IMR-90 (cell line): ENCODE measurements at regions of chr12 and their contacts with region 1.

Region 1: GRCh38 chr12:96578526-96579125 is 89.2 kb downstream of the CFAP54 start:
- DNase-seq: peak; percentile 64
- ATAC-seq: peak; percentile 88
- H3K4me3 ChIP-seq: no peak overlapping the region
- H3K27ac ChIP-seq: no peak overlapping the region
- H3K4me1 ChIP-seq: no peaks in the 10 kb centered on the region
- H3K27me3 ChIP-seq: no peaks in the 10 kb centered on the region
- CTCF ChIP-seq: peak; percentile 80
- POLR2A ChIP-seq: no peak
- RAD21 ChIP-seq: peak; percentile 85

Region 2: GRCh38 chr12:96617178-96617577 is 38.6 kb after region 1 on chr12:
- CTCF ChIA-PET with region 1: no interaction called
- POLR2A ChIA-PET with region 1: no interaction called
- dilution Hi-C with region 1: no loop called
- in situ Hi-C with region 1: no loop called
- intact Hi-C with region 1: no loop called
- DNase-seq: no peak
- ATAC-seq: no peak
- H3K4me3 ChIP-seq: no peak overlapping the region
- H3K27ac ChIP-seq: no peak overlapping the region
- H3K4me1 ChIP-seq: no peaks in the 10 kb centered on the region
- H3K27me3 ChIP-seq: no peaks in the 10 kb centered on the region
- CTCF ChIP-seq: no peak
- POLR2A ChIP-seq: no peak
- RAD21 ChIP-seq: no peak

Region 3: GRCh38 chr12:98373025-98373554 is 1794.5 kb after region 1 on chr12:
- CTCF ChIA-PET with region 1: no interaction called
- POLR2A ChIA-PET with region 1: no interaction called
- dilution Hi-C with region 1: no loop called
- in situ Hi-C with region 1: loop called (anchors 25 kb)
- intact Hi-C with region 1: loop called (anchors 2 kb)
- DNase-seq: peak; percentile 51
- ATAC-seq: peak; percentile 64; the same call in 1 of the 2 replicates
- H3K4me3 ChIP-seq: no peak overlapping the region
- H3K27ac ChIP-seq: no peak overlapping the region
- H3K4me1 ChIP-seq: no peaks in the 10 kb centered on the region
- H3K27me3 ChIP-seq: peaks cover 4% of the 10 kb centered on the region
- CTCF ChIP-seq: peak; percentile 75
- POLR2A ChIP-seq: no peak
- RAD21 ChIP-seq: peak; percentile 84

Region 4: GRCh38 chr12:98397316-98398105 is 1818.9 kb after region 1 on chr12:
- CTCF ChIA-PET with region 1: no interaction called
- POLR2A ChIA-PET with region 1: no interaction called
- dilution Hi-C with region 1: no loop called
- in situ Hi-C with region 1: loop called (anchors 25 kb)
- intact Hi-C with region 1: loop called (anchors 1 kb)
- DNase-seq: peak; percentile 71
- ATAC-seq: peak; percentile 98
- H3K4me3 ChIP-seq: peak overlapping the region; percentile 32
- H3K27ac ChIP-seq: no peak overlapping the region
- H3K4me1 ChIP-seq: peaks cover 4% of the 10 kb centered on the region; the same call in 1 of the 2 replicates
- H3K27me3 ChIP-seq: no peaks in the 10 kb centered on the region
- CTCF ChIP-seq: peak; percentile 87
- POLR2A ChIP-seq: no peak; the same call in 1 of the 2 replicates
- RAD21 ChIP-seq: peak; percentile 88